GM23248 (cell line): ENCODE measurements at regions of chr11 and their contacts with region 1.

Region 1: GRCh38 chr11:128146926-128147605 is 440.3 kb downstream of the ETS1 start:
- DNase-seq: peak; percentile 31
- H3K4me3 ChIP-seq: no peak overlapping the region
- H3K27ac ChIP-seq: no peak overlapping the region
- H3K4me1 ChIP-seq: 0 out of 2 replicates have a peak, but pooled peaks cover 5% of the 10 kb centered on the region
- H3K27me3 ChIP-seq: no peaks in the 10 kb centered on the region; the same call in 1 of the 2 replicates

Region 2: DNA sequence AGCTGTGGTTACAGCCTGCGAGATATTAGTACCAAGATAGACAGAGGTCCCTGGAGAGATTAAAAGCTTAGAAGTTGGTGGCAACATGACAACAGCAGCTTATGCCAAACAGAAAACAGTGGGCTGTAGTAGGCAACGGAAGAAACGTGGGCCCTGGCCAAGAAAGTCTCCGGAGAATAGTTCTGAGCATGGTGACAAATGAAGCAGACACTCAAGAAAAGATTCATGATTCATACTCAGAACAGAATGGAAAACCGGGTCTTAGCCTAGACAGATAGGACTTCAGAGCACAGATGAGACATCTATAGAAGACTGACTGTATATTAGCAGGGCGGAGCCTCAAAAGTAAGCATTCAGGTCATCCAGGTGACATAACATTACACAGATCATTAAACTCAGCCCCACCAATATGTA is 287.1 kb before region 1 on chr11:
- in situ Hi-C with region 1: loop called (anchors 25 kb)
- DNase-seq: peak; percentile 76
- H3K4me3 ChIP-seq: no peak overlapping the region
- H3K27ac ChIP-seq: no peak overlapping the region
- H3K4me1 ChIP-seq: peaks cover 12% of the 10 kb centered on the region; the same call in 1 of the 2 replicates
- H3K27me3 ChIP-seq: no peaks in the 10 kb centered on the region; the same call in 1 of the 2 replicates

Region 3: GRCh38 chr11:128311742-128312719 is 165.0 kb after region 1 on chr11:
- in situ Hi-C with region 1: no loop called
- DNase-seq: no peak
- H3K4me3 ChIP-seq: no peak overlapping the region
- H3K27ac ChIP-seq: no peak overlapping the region
- H3K4me1 ChIP-seq: no peaks in the 10 kb centered on the region
- H3K27me3 ChIP-seq: no peaks in the 10 kb centered on the region